CD4-positive, alpha-beta memory T cell (primary cell): ENCODE measurements at regions of chr1 and their contacts with region 1.

Region 1: DNA sequence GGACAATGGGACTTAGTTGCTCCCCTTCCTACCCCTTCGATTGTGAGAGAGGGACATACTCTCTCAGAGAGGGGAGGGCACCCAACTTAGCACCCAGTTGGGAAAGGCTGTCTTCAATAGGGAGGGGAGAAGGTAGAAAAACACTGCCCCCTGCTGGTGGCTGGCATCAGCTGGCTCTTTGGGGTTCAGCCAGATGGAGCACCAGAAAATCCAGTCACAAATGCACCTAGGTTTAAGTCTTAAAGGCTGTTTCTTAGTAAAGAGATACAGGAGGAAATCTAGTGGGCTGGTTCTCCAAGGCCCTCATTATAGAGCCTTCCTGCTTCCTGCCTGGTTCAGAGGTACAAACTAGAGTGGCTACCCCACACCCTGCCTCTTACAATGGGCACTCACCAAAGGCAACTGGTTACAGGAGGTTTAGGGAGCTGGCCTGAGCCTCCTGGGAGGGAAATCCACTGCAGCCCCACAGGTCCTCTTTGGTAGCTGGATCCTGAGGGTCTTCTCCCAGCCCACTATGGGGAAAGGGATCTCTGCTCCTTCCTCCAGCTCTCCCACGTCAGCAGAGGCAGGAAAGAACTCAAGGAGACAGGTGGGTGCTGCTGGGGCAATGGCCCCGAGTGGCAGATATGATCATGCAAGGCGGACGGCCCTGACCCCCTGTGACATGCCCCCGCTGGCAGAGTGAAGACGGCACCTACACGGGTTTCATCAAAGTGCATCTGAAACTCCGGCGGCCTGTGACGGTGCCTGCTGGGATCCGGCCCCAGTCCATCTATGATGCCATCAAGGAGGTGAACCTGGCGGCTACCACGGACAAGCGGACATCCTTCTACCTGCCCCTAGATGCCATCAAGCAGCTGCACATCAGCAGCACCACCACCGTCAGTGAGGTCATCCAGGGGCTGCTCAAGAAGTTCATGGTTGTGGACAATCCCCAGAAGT is 28.3 kb downstream of the EIF2D start:
- DNase-seq: peak; percentile 78 to 86 (median 82)
- H3K4me3 ChIP-seq: no peak overlapping the region
- H3K4me3 Mint-ChIP-seq: peak overlapping the region; percentile 71 to 92 (median 84)
- H3K27ac ChIP-seq: peak overlapping the region; percentile 89
- H3K27ac Mint-ChIP-seq: peak overlapping the region; percentile 93 to 99 (median 97)
- H3K4me1 ChIP-seq: peaks cover 68% of the 10 kb centered on the region
- H3K4me1 Mint-ChIP-seq: peaks cover 52 to 78% (median 59%) of the 10 kb centered on the region in 4 donors
- H3K27me3 ChIP-seq: no peaks in the 10 kb centered on the region
- H3K27me3 Mint-ChIP-seq: no peaks in the 10 kb centered on the region

Region 2: GRCh38 chr1:206469933-206470691 is 113.9 kb before region 1 on chr1 and contains the start of gene IKBKE:
- CTCF ChIA-PET with region 1: interaction called, 14 read pairs
- POLR2A ChIA-PET with region 1: interaction called, 4 read pairs
- intact Hi-C with region 1: no loop called
- DNase-seq: peak; percentile 44 to 69 (median 47)
- H3K4me3 ChIP-seq: peak within 1 kb of the TSS; percentile 99
- H3K4me3 Mint-ChIP-seq: peak within 1 kb of the TSS; percentile 84 to 97 (median 93)
- H3K27ac ChIP-seq: peak within 1 kb of the TSS; percentile 80
- H3K27ac Mint-ChIP-seq: peak within 1 kb of the TSS; percentile 64 to 95 (median 92)
- H3K4me1 ChIP-seq: peaks cover 86% of the 10 kb centered on the region
- H3K4me1 Mint-ChIP-seq: peaks cover 54 to 91% (median 79%) of the 10 kb centered on the region in 4 donors
- H3K27me3 ChIP-seq: no peaks in the 10 kb centered on the region
- H3K27me3 Mint-ChIP-seq: no peaks in the 10 kb centered on the region
- total RNA-seq, gene IKBKE: 81.8 to 92.3 TPM

Region 3: DNA sequence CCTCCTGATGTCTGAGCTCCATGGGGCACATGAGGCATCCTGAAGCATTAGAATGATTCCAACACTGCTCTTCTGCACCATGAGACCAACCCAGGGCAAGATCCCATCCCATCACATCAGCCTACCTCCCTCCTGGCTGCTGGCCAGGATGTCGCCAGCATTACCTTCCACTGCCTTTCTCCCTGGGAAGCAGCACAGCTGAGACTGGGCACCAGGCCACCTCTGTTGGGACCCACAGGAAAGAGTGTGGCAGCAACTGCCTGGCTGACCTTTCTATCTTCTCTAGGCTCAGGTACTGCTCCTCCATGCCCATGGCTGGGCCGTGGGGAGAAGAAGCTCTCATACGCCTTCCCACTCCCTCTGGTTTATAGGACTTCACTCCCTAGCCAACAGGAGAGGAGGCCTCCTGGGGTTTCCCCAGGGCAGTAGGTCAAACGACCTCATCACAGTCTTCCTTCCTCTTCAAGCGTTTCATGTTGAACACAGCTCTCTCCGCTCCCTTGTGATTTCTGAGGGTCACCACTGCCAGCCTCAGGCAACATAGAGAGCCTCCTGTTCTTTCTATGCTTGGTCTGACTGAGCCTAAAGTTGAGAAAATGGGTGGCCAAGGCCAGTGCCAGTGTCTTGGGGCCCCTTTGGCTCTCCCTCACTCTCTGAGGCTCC is 87.7 kb before region 1 on chr1:
- CTCF ChIA-PET with region 1: interaction called, 10 read pairs
- POLR2A ChIA-PET with region 1: no interaction called
- intact Hi-C with region 1: no loop called
- DNase-seq: no peak
- H3K4me3 ChIP-seq: no peak overlapping the region
- H3K4me3 Mint-ChIP-seq: no peak overlapping the region
- H3K27ac ChIP-seq: no peak overlapping the region
- H3K27ac Mint-ChIP-seq: peak overlapping the region; percentile 31 to 91 (median 68)
- H3K4me1 ChIP-seq: peaks cover 5% of the 10 kb centered on the region
- H3K4me1 Mint-ChIP-seq: peaks cover 0 to 15% (median 4%) of the 10 kb centered on the region in 4 donors
- H3K27me3 ChIP-seq: no peaks in the 10 kb centered on the region
- H3K27me3 Mint-ChIP-seq: no peaks in the 10 kb centered on the region

Region 4: DNA sequence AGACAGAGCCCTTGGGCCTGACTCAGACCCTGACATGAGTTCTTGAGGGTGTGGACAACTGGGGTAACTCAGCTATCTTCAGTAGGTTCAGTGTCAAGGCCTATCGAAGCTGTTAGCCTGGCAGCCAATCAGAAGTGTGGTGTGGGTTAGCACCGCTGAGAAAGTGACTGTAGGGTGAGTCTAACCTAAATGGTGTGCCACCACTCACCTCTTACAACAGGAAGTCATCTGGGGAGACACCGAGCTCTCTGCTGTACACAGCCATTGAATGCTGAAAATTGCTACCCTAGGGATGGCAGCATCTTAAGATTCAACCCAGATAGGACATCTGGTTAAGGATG is 32.0 kb before region 1 on chr1:
- CTCF ChIA-PET with region 1: interaction called, 550 read pairs
- POLR2A ChIA-PET with region 1: interaction called, 786 read pairs
- intact Hi-C with region 1: loop called (anchors 1 kb)
- DNase-seq: peak; percentile 80 to 95 (median 84)
- H3K4me3 ChIP-seq: no peak overlapping the region
- H3K4me3 Mint-ChIP-seq: peak overlapping the region; percentile 49 to 88 (median 72)
- H3K27ac ChIP-seq: peak overlapping the region; percentile 54
- H3K27ac Mint-ChIP-seq: peak overlapping the region; percentile 90 to 99 (median 96)
- H3K4me1 ChIP-seq: peaks cover 59% of the 10 kb centered on the region
- H3K4me1 Mint-ChIP-seq: peaks cover 34 to 65% (median 48%) of the 10 kb centered on the region in 4 donors
- H3K27me3 ChIP-seq: no peaks in the 10 kb centered on the region
- H3K27me3 Mint-ChIP-seq: no peaks in the 10 kb centered on the region

Region 5: DNA sequence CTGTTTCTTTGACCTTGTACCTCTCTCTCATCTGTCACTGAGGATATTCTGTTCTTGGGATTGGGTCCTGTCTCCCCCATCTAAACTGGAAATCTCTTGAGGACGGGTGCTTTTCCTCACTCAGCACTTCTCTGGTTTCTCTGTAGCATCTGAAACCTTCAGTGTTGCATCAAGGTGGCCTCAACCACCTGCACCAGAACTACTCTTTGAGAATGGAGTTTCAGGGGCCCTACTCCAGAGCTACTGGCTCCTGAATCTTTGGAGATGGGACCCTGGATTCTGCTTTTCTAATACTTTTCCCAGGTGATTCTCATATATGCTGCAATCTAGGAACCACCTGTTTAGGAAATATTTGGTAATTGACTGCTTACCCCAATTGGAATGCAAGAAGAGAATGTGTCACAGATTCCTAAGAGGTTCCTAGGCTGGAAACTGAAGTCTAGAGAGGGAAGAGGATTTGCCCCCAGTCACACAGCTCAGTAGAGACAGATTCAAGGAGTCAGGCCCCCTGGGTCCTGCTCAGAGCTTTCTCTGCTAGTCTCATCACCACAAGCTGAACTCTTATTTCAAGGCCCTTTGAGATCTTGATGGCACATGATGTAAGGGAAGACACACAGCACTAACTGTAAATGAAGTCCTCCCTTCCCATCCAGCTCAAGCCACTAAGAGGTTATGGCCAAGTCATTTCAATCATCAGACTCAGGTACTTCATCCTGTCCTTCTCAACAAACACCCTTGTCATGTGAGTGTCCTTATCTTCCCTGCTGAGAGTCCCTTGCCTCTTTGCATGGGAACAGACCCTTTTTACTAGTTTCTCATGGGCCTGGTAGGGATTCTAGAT is 20.4 kb before region 1 on chr1:
- CTCF ChIA-PET with region 1: interaction called, 226 read pairs
- POLR2A ChIA-PET with region 1: interaction called, 786 read pairs
- intact Hi-C with region 1: loop called (anchors 2 kb)
- DNase-seq: no peak
- H3K4me3 ChIP-seq: peak overlapping the region; percentile 24 to 46
- H3K4me3 Mint-ChIP-seq: peak overlapping the region; percentile 73 to 92 (median 84)
- H3K27ac ChIP-seq: peak overlapping the region; percentile 53
- H3K27ac Mint-ChIP-seq: peak overlapping the region; percentile 88 to 94 (median 94)
- H3K4me1 ChIP-seq: peaks cover 95% of the 10 kb centered on the region
- H3K4me1 Mint-ChIP-seq: peaks cover 73 to 99% (median 86%) of the 10 kb centered on the region in 4 donors
- H3K27me3 ChIP-seq: no peaks in the 10 kb centered on the region
- H3K27me3 Mint-ChIP-seq: no peaks in the 10 kb centered on the region

Region 6: DNA sequence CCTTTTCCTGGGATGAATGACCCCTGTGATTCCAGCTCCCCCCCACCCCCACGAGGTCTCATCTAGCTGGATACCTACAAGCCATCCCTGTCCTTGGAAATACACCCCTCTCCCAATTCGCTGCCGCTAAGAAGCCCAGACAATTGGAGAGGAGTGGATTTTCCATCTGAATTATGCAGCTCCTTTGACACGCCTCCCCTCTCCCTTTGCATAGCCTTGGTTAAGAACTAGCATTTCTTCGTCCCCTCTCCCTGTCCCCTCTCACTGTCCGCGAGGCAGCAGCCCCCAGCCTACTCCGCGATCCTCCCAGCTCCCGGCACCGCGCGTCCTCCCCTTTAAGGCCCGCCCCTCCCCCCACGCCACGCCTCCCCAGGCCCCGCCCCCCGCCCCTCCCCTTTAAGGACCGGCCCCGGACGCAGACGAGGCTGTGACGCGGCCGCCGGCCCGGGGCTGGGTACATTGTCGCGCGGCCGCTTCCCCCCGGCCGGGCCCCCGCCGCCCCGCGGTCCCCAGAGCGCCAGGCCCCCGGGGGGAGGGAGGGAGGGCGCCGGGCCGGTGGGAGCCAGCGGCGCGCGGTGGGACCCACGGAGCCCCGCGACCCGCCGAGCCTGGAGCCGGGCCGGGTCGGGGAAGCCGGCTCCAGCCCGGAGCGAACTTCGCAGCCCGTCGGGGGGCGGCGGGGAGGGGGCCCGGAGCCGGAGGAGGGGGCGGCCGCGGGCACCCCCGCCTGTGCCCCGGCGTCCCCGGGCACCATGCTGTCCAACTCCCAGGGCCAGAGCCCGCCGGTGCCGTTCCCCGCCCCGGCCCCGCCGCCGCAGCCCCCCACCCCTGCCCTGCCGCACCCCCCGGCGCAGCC is 100.7 kb after region 1 on chr1 and contains the start of gene MAPKAPK2:
- CTCF ChIA-PET with region 1: no interaction called
- POLR2A ChIA-PET with region 1: no interaction called
- intact Hi-C with region 1: no loop called
- DNase-seq: peak; percentile 71 to 77 (median 73)
- H3K4me3 ChIP-seq: peak within 1 kb of the TSS; percentile 55 to 93
- H3K4me3 Mint-ChIP-seq: peak within 1 kb of the TSS; percentile 93 to 100 (median 96)
- H3K27ac ChIP-seq: peak within 1 kb of the TSS; percentile 90
- H3K27ac Mint-ChIP-seq: peak within 1 kb of the TSS; percentile 94 to 98 (median 97)
- H3K4me1 ChIP-seq: peaks cover 45% of the 10 kb centered on the region
- H3K4me1 Mint-ChIP-seq: peaks cover 26 to 52% (median 37%) of the 10 kb centered on the region in 4 donors
- H3K27me3 ChIP-seq: no peaks in the 10 kb centered on the region
- H3K27me3 Mint-ChIP-seq: peaks cover 2 to 3% of the 10 kb centered on the region in 2 donors
- total RNA-seq, gene MAPKAPK2: 71.7 to 72.8 TPM

Region 7: DNA sequence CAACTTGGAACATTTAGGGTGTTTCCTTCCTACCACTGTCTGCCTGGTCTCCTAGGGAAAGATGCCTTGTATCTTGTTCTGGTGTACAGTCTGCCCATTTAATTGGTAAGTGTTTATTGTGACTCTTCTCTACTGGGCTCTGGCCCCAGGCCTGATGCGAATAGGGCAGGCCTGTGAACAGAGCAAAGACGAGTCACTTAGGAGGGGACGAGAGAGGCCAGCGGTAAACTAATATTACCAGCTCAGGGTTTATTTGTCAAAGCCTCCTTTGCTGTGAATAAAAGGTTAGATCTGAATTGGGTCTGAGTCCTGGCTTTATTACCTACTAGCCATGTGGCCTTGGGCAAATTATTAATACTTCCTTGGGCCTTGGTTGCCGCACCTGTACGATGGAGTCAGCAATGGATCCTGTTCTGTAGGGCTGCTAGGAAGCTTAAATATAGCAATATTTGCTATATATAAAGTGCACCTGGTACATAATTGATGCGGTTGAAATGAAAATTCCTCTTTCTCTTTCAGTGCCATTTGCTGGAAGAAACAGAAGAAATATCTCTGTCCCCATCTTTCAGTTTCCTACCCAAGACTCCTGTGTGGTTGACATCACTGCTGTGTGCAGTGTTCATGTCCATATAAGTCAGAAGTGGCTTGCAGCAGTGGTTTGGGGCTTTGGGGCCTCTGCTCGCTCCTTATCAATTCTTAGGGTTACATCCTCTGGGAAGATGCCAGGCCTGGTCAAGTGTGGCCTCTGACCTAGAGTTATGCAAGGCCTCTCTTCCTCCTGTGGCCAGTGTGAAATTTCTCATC is 133.1 kb after region 1 on chr1:
- CTCF ChIA-PET with region 1: no interaction called
- POLR2A ChIA-PET with region 1: no interaction called
- intact Hi-C with region 1: no loop called
- DNase-seq: peak; percentile 21 to 59 (median 33)
- H3K4me3 ChIP-seq: no peak overlapping the region
- H3K4me3 Mint-ChIP-seq: peak overlapping the region; percentile 57 to 83 (median 73)
- H3K27ac ChIP-seq: peak overlapping the region; percentile 34
- H3K27ac Mint-ChIP-seq: peak overlapping the region; percentile 87 to 97 (median 95)
- H3K4me1 ChIP-seq: peaks cover 86% of the 10 kb centered on the region
- H3K4me1 Mint-ChIP-seq: peaks cover 68 to 90% (median 81%) of the 10 kb centered on the region in 4 donors
- H3K27me3 ChIP-seq: no peaks in the 10 kb centered on the region
- H3K27me3 Mint-ChIP-seq: no peaks in the 10 kb centered on the region